ENCODE measurements at regions of chr2 and their contacts with region 1.

Region 1: DNA sequence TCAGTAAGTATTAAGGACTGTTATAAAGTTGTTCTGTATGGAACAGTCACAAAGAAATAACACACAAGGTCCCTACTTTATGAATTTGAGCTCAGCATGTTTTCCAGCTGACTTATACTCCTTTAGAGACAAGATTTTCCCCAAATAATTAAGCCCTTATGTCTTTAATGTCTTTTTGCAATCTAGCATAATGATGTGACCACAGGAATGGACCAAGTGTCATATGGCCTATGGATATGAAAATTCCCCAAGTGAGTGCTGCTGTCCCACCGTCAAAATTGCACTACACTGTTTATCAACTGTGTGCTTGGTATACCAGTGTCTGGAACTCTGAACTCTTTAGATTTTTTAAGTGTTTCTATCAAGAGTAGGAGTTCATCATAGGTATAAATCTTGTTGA is 369.6 kb downstream of the PID1 start:
- DNase-seq: no peak
- H3K4me3 ChIP-seq: no peak overlapping the region
- H3K27ac ChIP-seq: no peak overlapping the region
- H3K4me1 ChIP-seq: no peaks in the 10 kb centered on the region
- H3K27me3 ChIP-seq: no peaks in the 10 kb centered on the region
- CTCF ChIP-seq: no peak
- POLR2A ChIP-seq: no peak

Region 2: DNA sequence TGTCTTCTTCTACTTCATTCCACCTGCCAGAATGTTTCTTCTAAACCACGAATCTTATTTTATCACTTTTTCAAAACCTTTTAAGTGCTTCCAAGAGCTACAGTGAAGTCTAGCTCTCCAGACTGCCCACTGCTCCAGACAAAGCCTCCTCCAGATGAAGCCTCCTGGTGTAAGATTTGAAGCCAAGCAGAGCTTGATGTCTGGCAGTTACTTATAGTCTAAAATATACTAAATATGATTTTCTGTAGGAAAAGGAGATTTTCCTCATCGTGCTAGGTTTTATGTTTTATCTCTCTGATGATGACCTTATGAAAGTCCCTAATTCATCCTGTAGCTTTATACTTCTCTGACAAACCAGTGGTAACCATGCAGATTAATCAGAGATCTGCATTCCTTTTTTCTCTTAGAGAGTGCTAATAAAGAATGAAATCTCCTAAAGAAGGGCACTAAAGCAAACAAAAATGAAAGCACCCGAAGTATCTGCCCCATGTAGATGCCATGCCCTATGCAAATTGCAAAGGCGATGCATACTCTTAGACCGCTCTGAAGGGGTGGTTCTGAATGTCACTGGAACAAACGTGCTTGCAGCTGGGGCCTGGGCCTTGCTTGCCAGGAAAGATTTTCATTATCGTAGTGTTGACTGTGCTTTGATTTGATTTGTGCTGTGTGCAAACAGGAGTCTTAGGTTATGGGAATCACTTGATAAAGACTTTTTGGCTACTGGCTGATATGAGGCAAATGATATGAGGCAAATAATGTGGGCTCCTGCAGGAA is 55.4 kb after region 1 on chr2:
- intact Hi-C with region 1: loop called (anchors 2 kb)
- DNase-seq: no peak
- H3K4me3 ChIP-seq: no peak overlapping the region
- H3K27ac ChIP-seq: no peak overlapping the region
- H3K4me1 ChIP-seq: no peaks in the 10 kb centered on the region
- H3K27me3 ChIP-seq: no peaks in the 10 kb centered on the region
- CTCF ChIP-seq: no peak
- POLR2A ChIP-seq: no peak

Measured in breast epithelium (tissue), 4 donors.